ENCODE measurements at regions of chr17 and their contacts with region 1.

Region 1: GRCh38 chr17:48084932-48085444 is 16.3 kb downstream of the CBX1 start:
- DNase-seq: no peak
- ATAC-seq: no peak
- H3K4me3 ChIP-seq: no peak overlapping the region
- H3K4me3 Mint-ChIP-seq: no peak overlapping the region
- H3K27ac ChIP-seq: no peak overlapping the region
- H3K27ac Mint-ChIP-seq: no peak overlapping the region
- H3K4me1 ChIP-seq: no peaks in the 10 kb centered on the region
- H3K4me1 Mint-ChIP-seq: peaks cover 3% of the 10 kb centered on the region
- H3K27me3 ChIP-seq: no peaks in the 10 kb centered on the region
- H3K27me3 Mint-ChIP-seq: no peaks in the 10 kb centered on the region
- CTCF ChIP-seq: no peak

Region 2: DNA sequence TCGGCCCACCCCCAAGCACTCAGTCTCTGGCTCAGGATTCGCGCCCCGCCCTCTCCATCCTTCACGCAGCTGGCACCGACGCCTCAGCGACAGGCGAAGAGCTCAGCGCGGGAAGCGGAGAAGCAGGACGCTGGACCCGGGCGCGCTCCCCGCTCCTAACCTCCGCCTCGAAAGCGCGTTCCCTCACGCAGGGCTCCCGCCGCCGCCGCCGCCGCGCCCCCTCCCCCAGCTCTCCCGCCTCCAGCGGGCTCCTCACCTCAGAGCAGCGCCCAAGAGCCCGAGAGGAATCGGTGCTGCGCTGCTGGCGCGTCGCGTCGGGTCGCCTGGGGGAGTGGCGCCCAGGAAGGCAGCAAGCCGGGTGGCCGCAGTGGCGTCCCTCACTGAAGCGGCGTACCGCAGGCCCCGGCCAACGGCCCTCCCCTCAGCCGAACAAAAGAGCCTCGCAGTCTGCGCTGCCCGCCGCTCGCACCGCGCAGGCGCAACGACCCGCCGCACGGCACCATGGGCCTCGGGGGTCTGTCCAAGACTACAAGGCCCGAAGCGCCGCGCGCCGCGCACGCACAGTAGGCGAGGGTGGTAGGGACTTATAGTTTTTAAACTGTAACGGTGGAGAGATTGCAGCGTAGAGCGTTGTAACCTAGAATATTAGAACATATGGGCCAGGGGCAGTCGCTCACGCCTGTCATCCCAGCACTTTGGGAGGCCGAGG is 16.2 kb after region 1 on chr17 and contains the start of gene CBX1:
- CTCF ChIA-PET with region 1: interaction called, 29 read pairs
- POLR2A ChIA-PET with region 1: no interaction called
- intact Hi-C with region 1: loop called (anchors 1 kb)
- DNase-seq: peak; percentile 94
- ATAC-seq: peak; percentile 94
- H3K4me3 ChIP-seq: peak within 1 kb of the TSS; percentile 68 to 85 (median 77)
- H3K4me3 Mint-ChIP-seq: peak within 1 kb of the TSS; percentile 91
- H3K27ac ChIP-seq: peak within 1 kb of the TSS; percentile 72 to 76
- H3K27ac Mint-ChIP-seq: peak within 1 kb of the TSS; percentile 93
- H3K4me1 ChIP-seq: peaks cover 18 to 28% of the 10 kb centered on the region in 2 donors
- H3K4me1 Mint-ChIP-seq: peaks cover 41% of the 10 kb centered on the region
- H3K27me3 ChIP-seq: no peaks in the 10 kb centered on the region
- H3K27me3 Mint-ChIP-seq: no peaks in the 10 kb centered on the region
- CTCF ChIP-seq: no peak
- total RNA-seq, gene CBX1: 29.7 and 33.1 TPM in 2 replicates

Region 3: DNA sequence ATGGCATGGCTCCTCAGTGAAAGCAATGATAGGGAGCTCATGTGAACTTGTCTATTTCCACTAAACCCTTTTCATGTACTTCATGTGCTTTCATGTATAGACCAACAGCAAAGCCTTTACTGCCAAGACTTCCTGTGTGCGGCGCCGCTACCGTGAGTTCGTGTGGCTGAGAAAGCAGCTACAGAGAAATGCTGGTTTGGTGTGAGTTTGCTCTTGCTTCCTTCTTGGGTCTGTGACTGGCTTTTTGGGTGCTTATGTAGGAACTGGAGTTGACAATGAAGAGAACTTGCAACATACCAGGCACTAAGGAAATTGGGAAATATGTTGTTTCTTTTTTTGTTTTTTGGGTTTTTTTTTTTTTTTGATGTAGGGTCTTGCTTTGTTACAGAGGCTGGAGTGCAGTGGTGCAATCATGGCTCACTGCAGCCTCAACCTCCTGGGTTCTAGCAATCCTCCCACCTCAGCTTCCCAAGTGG is 28.3 kb after region 1 on chr17:
- CTCF ChIA-PET with region 1: interaction called, 41 read pairs
- POLR2A ChIA-PET with region 1: no interaction called
- intact Hi-C with region 1: no loop called
- DNase-seq: peak; percentile 66
- ATAC-seq: no peak
- H3K4me3 ChIP-seq: peak overlapping the region in 4 of 5 experiments; percentile 1 to 32 (median 12)
- H3K4me3 Mint-ChIP-seq: peak overlapping the region; percentile 81
- H3K27ac ChIP-seq: peak overlapping the region; percentile 67 to 96
- H3K27ac Mint-ChIP-seq: peak overlapping the region; percentile 91
- H3K4me1 ChIP-seq: peaks cover 53 to 64% of the 10 kb centered on the region in 2 donors
- H3K4me1 Mint-ChIP-seq: peaks cover 45% of the 10 kb centered on the region
- H3K27me3 ChIP-seq: no peaks in the 10 kb centered on the region
- H3K27me3 Mint-ChIP-seq: no peaks in the 10 kb centered on the region
- CTCF ChIP-seq: no peak

Region 4: GRCh38 chr17:48131216-48131824 is 46.3 kb after region 1 on chr17:
- CTCF ChIA-PET with region 1: interaction called, 237 read pairs
- POLR2A ChIA-PET with region 1: interaction called, 5 read pairs
- intact Hi-C with region 1: loop called (anchors 1 kb)
- DNase-seq: peak; percentile 79
- ATAC-seq: peak; percentile 87
- H3K4me3 ChIP-seq: no peak overlapping the region
- H3K4me3 Mint-ChIP-seq: no peak overlapping the region
- H3K27ac ChIP-seq: no peak overlapping the region
- H3K27ac Mint-ChIP-seq: peak overlapping the region; percentile 7
- H3K4me1 ChIP-seq: no peaks in the 10 kb centered on the region
- H3K4me1 Mint-ChIP-seq: peaks cover 3% of the 10 kb centered on the region
- H3K27me3 ChIP-seq: no peaks in the 10 kb centered on the region
- H3K27me3 Mint-ChIP-seq: no peaks in the 10 kb centered on the region
- CTCF ChIP-seq: peak; percentile 90

Region 5: DNA sequence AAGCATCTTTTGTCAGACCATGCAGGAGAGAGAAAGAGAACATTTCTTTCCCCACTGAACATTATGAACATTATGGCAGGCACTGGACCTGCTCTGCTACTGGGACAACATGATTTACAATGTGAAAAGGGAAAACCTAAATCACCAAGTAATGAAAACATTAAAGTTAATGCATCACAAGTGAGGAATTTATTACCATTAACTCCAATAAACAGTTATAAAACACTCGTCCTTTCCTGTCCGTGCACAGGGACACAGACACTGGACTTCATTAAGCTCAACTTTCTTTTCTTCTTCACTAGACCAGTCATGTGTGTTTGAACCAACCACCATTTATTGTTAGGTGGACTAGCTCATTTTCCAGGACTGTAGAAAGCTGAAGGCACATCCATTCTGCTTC is 118.0 kb after region 1 on chr17:
- CTCF ChIA-PET with region 1: no interaction called
- POLR2A ChIA-PET with region 1: no interaction called
- intact Hi-C with region 1: no loop called
- DNase-seq: no peak
- ATAC-seq: no peak
- H3K4me3 ChIP-seq: no peak overlapping the region
- H3K4me3 Mint-ChIP-seq: no peak overlapping the region
- H3K27ac ChIP-seq: no peak overlapping the region
- H3K27ac Mint-ChIP-seq: no peak overlapping the region
- H3K4me1 ChIP-seq: no peaks in the 10 kb centered on the region
- H3K4me1 Mint-ChIP-seq: peaks cover 8% of the 10 kb centered on the region
- H3K27me3 ChIP-seq: no peaks in the 10 kb centered on the region
- H3K27me3 Mint-ChIP-seq: no peaks in the 10 kb centered on the region
- CTCF ChIP-seq: no peak

Region 6: GRCh38 chr17:48382989-48383388 is 298.0 kb after region 1 on chr17:
- CTCF ChIA-PET with region 1: no interaction called
- POLR2A ChIA-PET with region 1: no interaction called
- intact Hi-C with region 1: no loop called
- DNase-seq: peak; percentile 16
- ATAC-seq: no peak
- H3K4me3 ChIP-seq: no peak overlapping the region
- H3K4me3 Mint-ChIP-seq: no peak overlapping the region
- H3K27ac ChIP-seq: no peak overlapping the region
- H3K27ac Mint-ChIP-seq: no peak overlapping the region
- H3K4me1 ChIP-seq: peaks cover 20% of the 10 kb centered on the region in 2 donors
- H3K4me1 Mint-ChIP-seq: peaks cover 28% of the 10 kb centered on the region
- H3K27me3 ChIP-seq: no peaks in the 10 kb centered on the region
- H3K27me3 Mint-ChIP-seq: peaks cover 4% of the 10 kb centered on the region
- CTCF ChIP-seq: no peak

Region 7: DNA sequence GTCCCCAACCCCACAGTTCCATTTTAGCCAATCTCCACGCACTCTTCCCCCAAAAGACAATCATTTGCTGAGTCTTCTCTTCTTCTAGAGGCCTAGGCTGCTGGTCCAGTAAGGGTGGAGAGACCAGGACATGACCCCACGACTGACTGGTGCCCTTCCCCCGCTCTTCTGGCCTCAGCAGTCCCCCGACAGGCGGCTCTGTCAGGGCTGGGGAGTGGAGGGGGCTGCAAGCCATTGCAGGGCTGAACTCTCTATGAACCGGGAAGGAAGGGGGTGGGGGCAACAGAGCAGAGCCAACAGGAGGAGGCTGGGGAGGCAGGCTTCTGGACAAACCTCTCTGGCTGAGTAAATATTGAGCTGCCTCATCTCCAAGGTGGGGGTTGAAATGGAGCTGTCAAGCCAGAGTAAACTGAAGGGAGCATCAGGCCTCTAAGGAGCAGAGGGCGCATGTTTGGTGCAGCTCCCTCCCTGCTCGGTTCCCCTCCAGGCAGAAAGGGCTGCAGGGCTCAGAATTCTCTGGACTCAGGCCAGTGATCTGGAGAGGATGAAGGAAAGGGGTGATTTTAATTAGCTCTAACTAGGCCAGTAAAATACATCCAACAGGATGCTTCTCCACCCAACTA is 437.2 kb after region 1 on chr17:
- CTCF ChIA-PET with region 1: no interaction called
- POLR2A ChIA-PET with region 1: no interaction called
- intact Hi-C with region 1: no loop called
- DNase-seq: no peak
- ATAC-seq: no peak
- H3K4me3 ChIP-seq: no peak overlapping the region
- H3K4me3 Mint-ChIP-seq: no peak overlapping the region
- H3K27ac ChIP-seq: no peak overlapping the region
- H3K27ac Mint-ChIP-seq: no peak overlapping the region
- H3K4me1 ChIP-seq: peaks cover 11 to 12% of the 10 kb centered on the region in 2 donors
- H3K4me1 Mint-ChIP-seq: peaks cover 5% of the 10 kb centered on the region
- H3K27me3 ChIP-seq: peaks cover 0 to 42% (median 23%) of the 10 kb centered on the region in 4 experiments
- H3K27me3 Mint-ChIP-seq: peaks cover 70% of the 10 kb centered on the region
- CTCF ChIP-seq: no peak

Measured in B cell (primary cell).